BJ (cell line): ENCODE measurements at regions of chr11 and their contacts with region 1.

Region 1: DNA sequence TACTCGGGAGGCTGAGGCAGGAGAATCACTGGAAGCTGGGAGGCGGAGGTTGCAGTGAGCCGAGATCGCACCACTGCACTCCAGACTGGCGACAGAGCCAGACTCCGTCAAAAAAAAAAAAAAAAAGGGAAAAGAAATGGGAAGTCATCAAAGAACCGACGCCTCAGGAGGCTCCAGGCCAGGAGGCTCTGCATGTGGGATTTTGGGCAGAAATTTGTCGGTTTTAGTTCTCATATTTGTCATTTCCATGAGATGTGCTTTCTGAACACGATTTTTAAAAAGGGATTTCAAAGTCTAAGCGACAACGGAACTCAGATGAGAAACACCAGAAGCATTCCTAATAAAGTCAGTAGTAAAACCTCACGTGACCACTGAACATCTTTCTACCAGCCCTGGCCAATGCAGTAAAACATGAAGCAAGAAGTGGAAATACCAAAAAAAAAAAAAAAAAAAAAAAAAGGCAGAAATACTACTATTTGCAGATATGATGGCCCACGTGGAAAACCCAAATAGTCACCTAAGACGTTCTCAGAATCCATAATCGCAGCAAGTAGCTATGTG is 738 bp upstream of the LTO1 start:
- DNase-seq: no peak
- H3K4me3 ChIP-seq: peak overlapping the region; percentile 88; the same call in 1 of the 2 replicates
- H3K27me3 ChIP-seq: no peaks in the 10 kb centered on the region
- CTCF ChIP-seq: no peak

Region 2: GRCh38 chr11:69496646-69497220 is 179.2 kb before region 1 on chr11:
- CTCF ChIA-PET with region 1: no interaction called
- POLR2A ChIA-PET with region 1: interaction called, 16 read pairs
- DNase-seq: no peak
- H3K4me3 ChIP-seq: no peak overlapping the region
- H3K27me3 ChIP-seq: no peaks in the 10 kb centered on the region; the same call in 1 of the 2 replicates
- CTCF ChIP-seq: no peak

Region 3: GRCh38 chr11:69691449-69691848 is 15.6 kb after region 1 on chr11:
- CTCF ChIA-PET with region 1: no interaction called
- POLR2A ChIA-PET with region 1: no interaction called
- DNase-seq: no peak
- H3K4me3 ChIP-seq: no peak overlapping the region
- H3K27me3 ChIP-seq: peaks cover 9% of the 10 kb centered on the region; the same call in 1 of the 2 replicates
- CTCF ChIP-seq: no peak